ENCODE measurements at regions of chr12 and their contacts with region 1.

Region 1: DNA sequence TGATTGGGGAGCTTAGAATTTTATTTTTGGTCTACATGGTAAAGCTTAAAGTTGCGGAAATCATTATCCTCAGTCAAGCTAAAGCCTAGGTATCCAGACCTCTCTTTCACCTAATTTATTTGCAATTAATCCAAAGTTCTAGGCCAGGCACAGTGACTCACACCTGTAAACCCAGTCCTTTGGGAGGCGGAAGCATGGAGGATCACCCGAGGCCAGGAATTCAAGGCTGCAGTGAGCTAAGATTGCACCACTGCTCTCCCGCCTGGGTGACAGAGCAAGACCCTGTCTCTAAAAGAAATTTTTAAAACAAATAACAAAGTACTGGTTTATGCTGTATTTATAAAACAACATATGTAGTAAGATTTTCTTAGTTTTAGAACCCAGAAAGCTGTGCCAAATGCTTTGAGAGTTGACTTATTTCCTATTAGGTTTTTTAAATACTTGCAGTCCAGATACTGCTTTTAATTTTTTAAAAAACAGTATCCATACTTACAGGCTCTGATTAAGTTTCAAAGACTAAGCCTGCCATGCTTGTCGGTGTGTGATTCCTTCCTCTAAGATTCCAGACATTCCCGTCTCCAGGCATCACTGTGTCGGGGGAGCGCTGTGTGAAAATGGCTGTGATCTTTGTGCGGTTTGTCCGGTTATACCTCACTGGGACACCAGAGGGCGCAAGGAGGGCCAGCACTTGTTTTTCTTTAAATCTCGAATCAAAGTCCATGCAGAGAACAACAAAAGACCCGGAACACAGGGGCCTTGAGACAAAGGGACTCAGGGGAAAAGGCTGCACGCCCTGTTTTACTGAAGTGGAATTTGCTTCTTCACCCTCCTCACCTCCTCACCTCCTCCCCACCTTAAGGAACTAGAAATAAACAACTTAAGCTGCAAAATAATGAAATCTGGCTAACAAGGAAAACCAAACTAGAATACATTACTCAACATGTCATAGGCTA is 24.6 kb upstream of the TMPO start:
- DNase-seq: peak; percentile 76
- H3K4me3 ChIP-seq: no peak overlapping the region
- H3K27ac ChIP-seq: peak overlapping the region; percentile 55
- H3K27me3 ChIP-seq: no peaks in the 10 kb centered on the region
- CTCF ChIP-seq: peak; percentile 94

Region 2: DNA sequence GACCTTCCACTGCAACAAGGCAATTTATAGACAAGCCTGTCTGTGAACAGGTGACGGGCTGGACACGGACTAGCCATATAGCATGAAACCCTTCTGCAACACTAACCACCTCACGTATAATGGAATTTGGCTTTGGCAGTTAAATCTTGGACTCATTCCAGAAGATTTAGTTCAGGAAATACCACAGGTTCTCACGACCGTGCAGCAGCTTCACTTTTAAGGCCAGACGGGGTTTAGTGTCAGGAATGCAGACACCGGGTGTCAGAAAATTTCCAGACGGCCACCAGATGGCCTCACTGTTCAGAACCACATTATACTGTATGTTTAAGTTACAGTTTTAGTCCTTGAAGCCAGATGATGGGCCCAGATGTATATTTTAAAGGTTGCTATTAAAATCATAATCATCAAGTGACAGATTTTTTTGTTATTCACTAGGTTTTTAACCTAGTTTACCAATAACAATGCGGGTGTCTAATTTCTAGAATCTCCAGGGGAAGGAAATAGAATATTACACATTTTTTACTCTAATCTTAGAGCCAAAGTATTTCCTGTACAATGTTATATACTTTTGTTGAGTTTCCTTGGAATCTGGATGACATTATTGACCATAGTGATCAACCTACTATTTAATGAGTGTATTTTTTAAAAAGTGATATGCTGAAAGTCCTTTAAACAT is 65.9 kb before region 1 on chr12:
- CTCF ChIA-PET with region 1: interaction called, 15 read pairs
- POLR2A ChIA-PET with region 1: no interaction called
- DNase-seq: peak; percentile 43
- H3K4me3 ChIP-seq: no peak overlapping the region
- H3K27ac ChIP-seq: no peak overlapping the region
- H3K27me3 ChIP-seq: no peaks in the 10 kb centered on the region
- CTCF ChIP-seq: peak; percentile 73

Region 3: GRCh38 chr12:98470469-98471082 is 20.2 kb before region 1 on chr12:
- CTCF ChIA-PET with region 1: interaction called, 13 read pairs
- POLR2A ChIA-PET with region 1: interaction called, 3 read pairs
- DNase-seq: no peak
- H3K4me3 ChIP-seq: no peak overlapping the region
- H3K27ac ChIP-seq: no peak overlapping the region
- H3K27me3 ChIP-seq: peaks cover 9% of the 10 kb centered on the region
- CTCF ChIP-seq: no peak

Region 4: GRCh38 chr12:98503592-98504367 is 13.0 kb after region 1 on chr12:
- CTCF ChIA-PET with region 1: interaction called, 34 read pairs
- POLR2A ChIA-PET with region 1: interaction called, 4 read pairs
- DNase-seq: peak; percentile 83
- H3K4me3 ChIP-seq: peak overlapping the region; percentile 74
- H3K27ac ChIP-seq: peak overlapping the region; percentile 98
- H3K27me3 ChIP-seq: no peaks in the 10 kb centered on the region
- CTCF ChIP-seq: no peak

Region 5: DNA sequence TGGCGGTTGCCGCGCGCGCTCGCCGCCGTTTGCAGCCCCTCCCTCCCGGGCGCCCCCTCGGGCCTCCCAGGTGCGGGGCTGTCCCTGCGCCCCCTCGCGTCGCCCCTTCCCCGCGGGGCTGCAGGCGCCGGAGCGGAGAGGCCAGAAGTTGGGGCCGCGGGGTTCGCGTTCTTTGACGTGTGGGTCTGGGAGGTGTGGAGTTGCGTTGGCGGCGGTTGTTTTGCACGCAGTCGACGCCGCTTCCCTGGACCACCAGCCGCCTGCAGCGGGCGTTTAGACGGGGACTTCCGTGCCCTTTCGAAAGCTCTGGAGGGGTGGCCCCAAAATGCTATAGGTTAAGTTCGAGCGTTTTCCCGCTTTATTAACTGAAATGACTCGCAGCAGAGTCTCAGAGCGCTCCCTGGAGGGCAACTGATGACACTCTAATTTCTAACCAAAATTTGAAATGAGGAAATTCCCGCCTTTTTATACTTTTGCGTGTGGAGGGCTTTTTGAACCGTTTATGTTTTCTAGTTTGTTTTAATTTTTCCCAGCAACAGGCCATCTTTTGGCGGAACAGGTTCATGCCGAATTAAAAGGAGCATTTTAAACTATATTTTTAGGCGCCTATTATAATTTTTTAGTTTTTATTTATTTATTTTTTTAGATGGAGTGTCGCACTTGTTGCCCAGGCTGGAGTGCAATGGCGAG is 25.6 kb after region 1 on chr12:
- CTCF ChIA-PET with region 1: interaction called, 51 read pairs
- POLR2A ChIA-PET with region 1: no interaction called
- DNase-seq: peak; percentile 59
- H3K4me3 ChIP-seq: peak overlapping the region; percentile 90
- H3K27ac ChIP-seq: peak overlapping the region; percentile 31
- H3K27me3 ChIP-seq: no peaks in the 10 kb centered on the region
- CTCF ChIP-seq: peak; percentile 75

Region 6: GRCh38 chr12:98653866-98654493 is 163.2 kb after region 1 on chr12:
- CTCF ChIA-PET with region 1: interaction called, 14 read pairs
- POLR2A ChIA-PET with region 1: no interaction called
- DNase-seq: peak; percentile 34
- H3K4me3 ChIP-seq: no peak overlapping the region
- H3K27ac ChIP-seq: no peak overlapping the region
- H3K27me3 ChIP-seq: no peaks in the 10 kb centered on the region
- CTCF ChIP-seq: peak; percentile 72

Region 7: GRCh38 chr12:98803468-98804209 is 312.9 kb after region 1 on chr12:
- CTCF ChIA-PET with region 1: no interaction called
- POLR2A ChIA-PET with region 1: no interaction called
- DNase-seq: no peak
- H3K4me3 ChIP-seq: no peak overlapping the region
- H3K27ac ChIP-seq: no peak overlapping the region
- H3K27me3 ChIP-seq: peaks cover 2% of the 10 kb centered on the region
- CTCF ChIP-seq: no peak